ENCODE measurements at regions of chr7 and their contacts with region 1.

Region 1: GRCh38 chr7:109751241-109751640 is 1181.6 kb downstream of the DNAJB9 start:
- DNase-seq: peak; percentile 7
- ATAC-seq: no peak
- H3K4me3 ChIP-seq: no peak overlapping the region
- H3K27ac ChIP-seq: no peak overlapping the region
- H3K4me1 ChIP-seq: no peaks in the 10 kb centered on the region
- H3K27me3 ChIP-seq: no peaks in the 10 kb centered on the region
- CTCF ChIP-seq: no peak
- POLR2A ChIP-seq: no peak
- RAD21 ChIP-seq: no peak

Region 2: GRCh38 chr7:109462148-109462547 is 289.1 kb before region 1 on chr7:
- CTCF ChIA-PET with region 1: no interaction called
- POLR2A ChIA-PET with region 1: no interaction called
- dilution Hi-C with region 1: no loop called
- in situ Hi-C with region 1: no loop called
- intact Hi-C with region 1: no loop called
- DNase-seq: no peak
- ATAC-seq: no peak
- H3K4me3 ChIP-seq: no peak overlapping the region
- H3K27ac ChIP-seq: no peak overlapping the region
- H3K4me1 ChIP-seq: no peaks in the 10 kb centered on the region
- H3K27me3 ChIP-seq: no peaks in the 10 kb centered on the region
- CTCF ChIP-seq: no peak
- POLR2A ChIP-seq: no peak
- RAD21 ChIP-seq: no peak

Region 3: DNA sequence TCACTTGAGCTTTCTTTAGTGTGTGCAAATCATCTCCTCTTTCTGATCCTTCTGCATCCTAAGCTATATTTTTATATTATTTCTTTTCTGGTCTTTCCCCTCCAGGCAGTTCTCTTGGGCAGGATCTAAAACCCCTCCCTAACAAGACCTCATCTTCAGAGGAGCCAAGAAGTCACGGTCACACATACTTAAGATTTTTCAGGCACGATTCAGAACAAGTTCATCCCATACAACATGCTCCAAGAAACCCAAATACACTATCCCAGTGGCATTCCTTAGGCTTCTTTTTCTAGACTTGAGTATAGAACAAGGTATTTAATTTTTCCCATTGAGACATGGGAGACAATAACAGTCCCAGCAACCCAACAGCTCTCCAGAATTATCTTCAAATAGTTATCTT is 69.9 kb after region 1 on chr7:
- CTCF ChIA-PET with region 1: no interaction called
- POLR2A ChIA-PET with region 1: no interaction called
- dilution Hi-C with region 1: no loop called
- in situ Hi-C with region 1: no loop called
- intact Hi-C with region 1: loop called (anchors 10 kb)
- DNase-seq: no peak
- ATAC-seq: no peak
- H3K4me3 ChIP-seq: no peak overlapping the region
- H3K27ac ChIP-seq: no peak overlapping the region
- H3K4me1 ChIP-seq: no peaks in the 10 kb centered on the region
- H3K27me3 ChIP-seq: no peaks in the 10 kb centered on the region
- CTCF ChIP-seq: no peak
- POLR2A ChIP-seq: no peak
- RAD21 ChIP-seq: no peak

Region 4: DNA sequence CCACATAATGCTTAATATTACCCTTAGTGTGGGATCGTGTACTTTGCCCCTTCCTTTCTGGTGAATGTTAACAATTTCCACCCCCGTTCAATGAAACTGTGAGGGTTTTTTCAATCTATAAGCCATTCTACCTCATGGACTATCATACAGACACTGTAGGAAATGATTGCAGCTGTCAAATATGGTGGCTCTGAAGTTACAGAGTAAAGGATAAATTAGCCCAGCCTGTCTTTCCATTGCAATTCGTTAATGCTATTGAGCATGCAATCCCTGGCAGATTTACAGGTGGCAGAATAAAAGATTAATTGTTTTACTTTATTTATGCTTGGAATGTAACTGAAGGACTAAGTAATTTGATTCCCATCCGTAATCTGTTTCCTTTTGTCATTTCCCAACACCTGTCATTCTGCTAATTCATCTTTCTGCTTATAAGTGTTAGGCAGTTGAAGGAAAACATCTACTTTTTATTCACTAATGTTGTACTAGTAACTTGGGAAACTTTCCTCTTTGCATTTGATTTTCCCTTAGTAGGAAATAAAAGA is 128.1 kb after region 1 on chr7:
- CTCF ChIA-PET with region 1: no interaction called
- POLR2A ChIA-PET with region 1: no interaction called
- dilution Hi-C with region 1: no loop called
- in situ Hi-C with region 1: no loop called
- intact Hi-C with region 1: no loop called
- DNase-seq: no peak
- ATAC-seq: no peak
- H3K4me3 ChIP-seq: no peak overlapping the region
- H3K27ac ChIP-seq: no peak overlapping the region
- H3K4me1 ChIP-seq: no peaks in the 10 kb centered on the region
- H3K27me3 ChIP-seq: no peaks in the 10 kb centered on the region
- CTCF ChIP-seq: no peak
- POLR2A ChIP-seq: no peak
- RAD21 ChIP-seq: no peak

Measured in IMR-90 (cell line).